Adrenal gland (tissue), 19 donors: ENCODE measurements at regions of chr11 and their contacts with region 1.

Region 1: GRCh38 chr11:69088676-69089146 is 40.0 kb downstream of the TPCN2 start:
- DNase-seq: peak; percentile 66 to 88 (median 71)
- H3K4me3 ChIP-seq: no peak overlapping the region
- H3K27ac ChIP-seq: peak overlapping the region in 2 of 5 donors; percentile 5 to 52
- H3K4me1 ChIP-seq: peaks cover 4 to 9% of the 10 kb centered on the region in 2 donors
- H3K27me3 ChIP-seq: no peaks in the 10 kb centered on the region
- CTCF ChIP-seq: peak; percentile 50 to 69 (median 64)
- POLR2A ChIP-seq: no peak

Region 2: GRCh38 chr11:68939638-68940555 is 148.8 kb before region 1 on chr11:
- intact Hi-C with region 1: loop called in 1 of 2 experiments (anchors 10 kb)
- DNase-seq: no peak
- H3K4me3 ChIP-seq: no peak overlapping the region
- H3K27ac ChIP-seq: no peak overlapping the region
- H3K4me1 ChIP-seq: no peaks in the 10 kb centered on the region
- H3K27me3 ChIP-seq: no peaks in the 10 kb centered on the region
- CTCF ChIP-seq: no peak
- POLR2A ChIP-seq: no peak

Region 3: GRCh38 chr11:68962527-68963250 is 126.0 kb before region 1 on chr11:
- intact Hi-C with region 1: no loop called
- DNase-seq: no peak
- H3K4me3 ChIP-seq: no peak overlapping the region
- H3K27ac ChIP-seq: no peak overlapping the region
- H3K4me1 ChIP-seq: no peaks in the 10 kb centered on the region
- H3K27me3 ChIP-seq: no peaks in the 10 kb centered on the region
- CTCF ChIP-seq: no peak
- POLR2A ChIP-seq: no peak

Region 4: GRCh38 chr11:68978931-68979594 is 109.6 kb before region 1 on chr11:
- intact Hi-C with region 1: no loop called
- DNase-seq: peak in 1 of 7 donors; percentile 23
- H3K4me3 ChIP-seq: no peak overlapping the region
- H3K27ac ChIP-seq: no peak overlapping the region
- H3K4me1 ChIP-seq: no peaks in the 10 kb centered on the region
- H3K27me3 ChIP-seq: no peaks in the 10 kb centered on the region
- CTCF ChIP-seq: no peak
- POLR2A ChIP-seq: no peak